Common myeloid progenitor, CD34-positive (primary cell): ENCODE measurements at regions of chr18 and their contacts with region 1.

Region 1: DNA sequence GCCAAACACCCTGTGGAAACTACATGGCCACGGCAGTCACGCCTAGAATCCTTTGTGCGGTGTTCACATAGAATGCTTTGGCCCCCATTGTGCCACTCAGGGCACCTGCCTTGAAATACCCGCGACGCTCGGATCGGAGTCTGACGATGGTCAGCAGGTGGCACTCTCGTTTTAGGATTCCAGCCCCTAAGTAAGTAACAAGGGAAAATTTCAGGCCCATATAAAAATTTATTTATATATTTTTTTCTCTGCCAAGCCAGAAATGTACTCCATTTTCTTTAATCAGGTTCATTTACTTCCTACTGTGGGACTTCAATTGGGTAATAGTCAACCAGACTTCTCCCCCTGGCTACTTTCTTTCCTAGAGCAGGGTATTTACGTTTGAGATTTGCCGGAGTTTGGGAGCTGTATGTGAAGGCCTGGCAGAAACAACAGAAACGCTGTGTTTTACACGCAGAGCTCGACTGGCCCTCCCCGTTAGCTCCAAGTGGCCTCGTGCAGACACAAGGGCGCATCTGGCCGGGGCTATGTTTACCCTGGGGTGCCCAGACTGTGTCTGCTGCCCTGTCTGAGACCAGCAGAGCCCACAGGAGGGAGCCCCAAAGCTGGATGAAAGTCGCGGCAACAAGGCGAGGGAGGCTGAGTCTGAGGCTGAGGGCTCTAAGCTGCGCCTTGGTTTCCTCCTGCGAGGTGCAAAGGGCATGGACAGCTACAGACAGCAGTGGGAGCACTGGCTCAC is 41.6 kb downstream of the LRRC30 start:
- DNase-seq: peak; percentile 83 to 90 (median 86)
- H3K4me3 ChIP-seq: peak overlapping the region in 4 of 7 experiments; percentile 12 to 72 (median 42)
- H3K27ac ChIP-seq: no peak overlapping the region
- H3K4me1 ChIP-seq: peaks cover 0 to 17% (median 14%) of the 10 kb centered on the region in 4 experiments
- H3K27me3 ChIP-seq: no peaks in the 10 kb centered on the region

Region 2: DNA sequence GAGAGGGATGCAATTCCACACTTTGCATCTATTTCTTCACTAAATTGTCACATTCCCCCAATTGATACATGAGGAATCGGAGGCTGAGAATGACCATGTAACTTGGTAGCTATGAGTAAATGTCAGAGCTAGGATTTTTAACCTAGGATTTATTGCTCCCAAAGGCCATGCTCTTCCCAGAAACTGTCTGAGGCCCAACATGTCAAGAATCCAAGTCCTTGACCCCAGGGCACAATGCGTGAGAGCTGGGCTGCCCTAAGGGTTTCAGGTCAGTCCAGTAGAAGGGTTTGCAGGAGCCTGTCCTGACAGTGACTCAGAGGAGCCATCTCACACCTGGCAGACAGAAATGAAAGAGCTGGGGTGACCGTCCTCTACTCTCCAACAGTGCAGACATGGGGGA is 11.3 kb before region 1 on chr18:
- CTCF ChIA-PET with region 1: interaction called, 21 read pairs
- POLR2A ChIA-PET with region 1: no interaction called
- DNase-seq: no peak
- H3K4me3 ChIP-seq: no peak overlapping the region
- H3K27ac ChIP-seq: no peak overlapping the region
- H3K4me1 ChIP-seq: no peaks in the 10 kb centered on the region
- H3K27me3 ChIP-seq: peaks cover 0 to 6% (median 0%) of the 10 kb centered on the region in 5 experiments

Region 3: DNA sequence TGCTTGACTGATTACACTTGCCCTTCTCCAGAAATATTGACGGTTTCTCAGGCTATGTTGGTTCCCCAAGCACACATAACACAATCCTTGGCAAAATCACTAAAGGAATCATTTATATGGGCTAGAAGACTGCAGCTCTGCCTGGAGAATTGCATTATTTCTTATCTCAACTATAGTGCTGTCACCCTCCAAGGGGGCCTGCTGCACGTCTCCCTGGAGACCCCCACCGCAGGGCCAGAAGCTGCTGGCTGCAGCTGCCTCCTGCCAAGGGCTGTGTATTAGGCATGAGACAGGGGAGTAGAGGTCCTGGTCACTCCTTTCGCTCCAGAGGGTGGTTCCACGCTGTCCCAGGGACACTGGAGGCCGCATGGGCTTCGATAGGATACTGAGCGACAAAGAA is 35.0 kb after region 1 on chr18:
- CTCF ChIA-PET with region 1: no interaction called
- POLR2A ChIA-PET with region 1: no interaction called
- DNase-seq: no peak
- H3K4me3 ChIP-seq: no peak overlapping the region
- H3K27ac ChIP-seq: no peak overlapping the region
- H3K4me1 ChIP-seq: no peaks in the 10 kb centered on the region
- H3K27me3 ChIP-seq: no peaks in the 10 kb centered on the region

Region 4: DNA sequence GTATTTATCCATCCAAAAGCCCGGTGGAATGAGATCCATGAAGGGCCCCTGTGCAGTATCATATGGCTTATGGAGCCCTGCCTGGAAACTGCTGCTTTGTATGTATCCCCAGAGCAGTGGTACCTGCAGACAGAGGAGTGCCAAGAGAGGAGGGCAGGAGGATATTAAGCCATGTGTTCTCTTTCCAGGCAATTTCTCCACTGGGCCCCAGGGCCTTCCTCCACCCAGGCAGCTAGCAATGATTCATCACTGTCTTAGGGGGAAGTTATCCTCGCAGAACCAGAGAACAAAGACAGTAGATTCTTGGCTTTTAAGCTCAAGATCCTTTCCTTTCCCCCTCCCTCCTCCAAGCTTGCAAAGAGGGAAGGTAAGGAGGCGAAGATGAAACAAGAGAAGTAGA is 56.5 kb after region 1 on chr18:
- CTCF ChIA-PET with region 1: no interaction called
- POLR2A ChIA-PET with region 1: no interaction called
- DNase-seq: peak in 2 of 3 donors; percentile 20 to 24
- H3K4me3 ChIP-seq: no peak overlapping the region
- H3K27ac ChIP-seq: no peak overlapping the region
- H3K4me1 ChIP-seq: peaks cover 0 to 36% (median 22%) of the 10 kb centered on the region in 4 experiments
- H3K27me3 ChIP-seq: no peaks in the 10 kb centered on the region

Region 5: DNA sequence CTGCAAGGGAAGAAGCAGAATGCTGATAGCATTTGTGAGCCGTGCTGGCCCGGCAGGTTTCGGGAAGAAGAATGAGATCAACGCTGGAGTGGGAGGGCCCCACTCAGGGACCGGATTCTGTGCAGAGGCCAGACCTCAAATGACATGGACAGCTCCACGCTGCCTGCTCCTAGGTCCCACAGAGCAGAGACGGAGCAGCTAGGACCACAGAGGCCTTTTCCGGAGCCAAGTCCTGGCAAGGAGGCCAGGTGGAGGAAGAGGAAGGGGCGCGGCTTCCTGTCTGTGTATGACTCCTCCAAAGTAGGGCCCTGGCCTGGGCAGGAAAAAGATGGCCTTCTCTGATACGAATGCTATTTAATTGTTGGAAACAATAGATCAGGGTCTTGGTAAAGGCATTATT is 98.3 kb after region 1 on chr18:
- CTCF ChIA-PET with region 1: interaction called, 14 read pairs
- POLR2A ChIA-PET with region 1: no interaction called
- DNase-seq: peak; percentile 82 to 92 (median 86)
- H3K4me3 ChIP-seq: peak overlapping the region in 3 of 7 experiments; percentile 22 to 46 (median 30)
- H3K27ac ChIP-seq: peak overlapping the region in 1 of 2 experiments; percentile 72
- H3K4me1 ChIP-seq: peaks cover 8 to 80% (median 67%) of the 10 kb centered on the region in 4 experiments
- H3K27me3 ChIP-seq: no peaks in the 10 kb centered on the region

Region 6: GRCh38 chr18:7566567-7567473 is 294.3 kb after region 1 on chr18 and contains the start of gene PTPRM:
- CTCF ChIA-PET with region 1: interaction called, 25 read pairs
- POLR2A ChIA-PET with region 1: interaction called, 6 read pairs
- DNase-seq: peak; percentile 78 to 87 (median 86)
- H3K4me3 ChIP-seq: peak within 1 kb of the TSS; percentile 70 to 91 (median 80)
- H3K27ac ChIP-seq: peak within 1 kb of the TSS in 1 of 2 experiments; percentile 74
- H3K4me1 ChIP-seq: peaks cover 0 to 23% (median 19%) of the 10 kb centered on the region in 4 experiments
- H3K27me3 ChIP-seq: peaks cover 0 to 28% (median 0%) of the 10 kb centered on the region in 5 experiments

Region 7: GRCh38 chr18:8478166-8478967 is 1205.9 kb after region 1 on chr18:
- CTCF ChIA-PET with region 1: interaction called, 21 read pairs
- POLR2A ChIA-PET with region 1: no interaction called
- DNase-seq: peak; percentile 31 to 63 (median 47)
- H3K4me3 ChIP-seq: no peak overlapping the region
- H3K27ac ChIP-seq: no peak overlapping the region
- H3K4me1 ChIP-seq: no peaks in the 10 kb centered on the region
- H3K27me3 ChIP-seq: peaks cover 0 to 9% (median 0%) of the 10 kb centered on the region in 5 experiments